BJ (cell line): ENCODE measurements at regions of chr5 and their contacts with region 1.

Region 1: GRCh38 chr5:31531888-31532710 is at the starts of genes C5orf22 and DROSHA:
- DNase-seq: peak; percentile 80
- H3K4me3 ChIP-seq: peak within 1 kb of the TSS; percentile 97
- H3K27me3 ChIP-seq: no peaks in the 10 kb centered on the region
- CTCF ChIP-seq: no peak
- polyA plus RNA-seq, gene C5orf22: 9.8 and 19.8 TPM in 2 replicates
- polyA plus RNA-seq, gene DROSHA: 27.6 and 42.5 TPM in 2 replicates

Region 2: DNA sequence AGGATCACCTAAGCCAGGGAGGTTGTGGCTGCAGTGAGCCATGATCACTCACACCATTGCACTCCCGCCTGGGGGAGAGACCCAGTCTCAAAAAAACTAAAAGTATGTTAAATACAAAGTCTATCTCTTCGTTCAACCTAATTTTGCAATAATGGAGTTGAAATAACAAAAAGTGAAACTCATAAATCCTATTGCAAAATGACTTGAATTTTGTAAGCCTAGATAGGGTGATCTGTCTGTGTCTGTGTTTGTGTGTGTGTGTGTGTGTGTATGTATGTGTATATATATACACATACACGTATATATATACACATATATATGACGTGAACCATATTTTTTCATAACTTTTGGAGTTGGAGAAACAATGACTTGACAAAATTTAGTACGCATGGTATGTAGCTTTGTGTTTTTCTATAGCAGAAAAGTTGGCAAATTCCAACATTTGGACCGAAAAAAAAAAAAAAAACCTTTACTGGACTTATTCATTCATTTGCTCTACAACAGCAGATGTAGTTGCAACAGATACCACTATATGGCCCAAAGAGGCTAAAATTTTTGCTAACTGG is 415.6 kb before region 1 on chr5:
- CTCF ChIA-PET with region 1: no interaction called
- POLR2A ChIA-PET with region 1: interaction called, 11 read pairs
- DNase-seq: no peak
- H3K4me3 ChIP-seq: no peak overlapping the region
- H3K27me3 ChIP-seq: no peaks in the 10 kb centered on the region
- CTCF ChIP-seq: no peak

Region 3: GRCh38 chr5:31854181-31855133 is 322.4 kb after region 1 on chr5:
- CTCF ChIA-PET with region 1: no interaction called
- POLR2A ChIA-PET with region 1: no interaction called
- DNase-seq: no peak
- H3K4me3 ChIP-seq: peak overlapping the region; percentile 33
- H3K27me3 ChIP-seq: peaks cover 17% of the 10 kb centered on the region
- CTCF ChIP-seq: no peak